K562 (cell line): ENCODE measurements at regions of chr3 and their contacts with region 1.

Region 1: GRCh38 chr3:47836986-47837385 is 34.0 kb downstream of the DHX30 start:
- DNase-seq: no peak
- ATAC-seq: peak; percentile 8; the same call in 2 of the 3 replicates
- H3K4me3 ChIP-seq: no peak overlapping the region
- H3K27ac ChIP-seq: no peak overlapping the region
- H3K4me1 ChIP-seq: no peaks in the 10 kb centered on the region
- H3K27me3 ChIP-seq: no peaks in the 10 kb centered on the region
- CTCF ChIP-seq: no peak
- EP300 ChIP-seq: no peak
- POLR2A ChIP-seq: no peak
- RAD21 ChIP-seq: no peak

Region 2: GRCh38 chr3:47849699-47850563 is 12.9 kb after region 1 on chr3:
- CTCF ChIA-PET with region 1: interaction called, 3 read pairs
- POLR2A ChIA-PET with region 1: interaction called, 13 read pairs
- in situ Hi-C with region 1: no loop called
- intact Hi-C with region 1: no loop called
- DNase-seq: peak in 2 of 4 experiments; percentile 46 to 60
- ATAC-seq: peak; percentile 85
- H3K4me3 ChIP-seq: no peak overlapping the region
- H3K27ac ChIP-seq: no peak overlapping the region
- H3K4me1 ChIP-seq: peaks cover 0 to 30% of the 10 kb centered on the region in 2 experiments; a peak in 1 of 5 replicates
- H3K27me3 ChIP-seq: no peaks in the 10 kb centered on the region
- CTCF ChIP-seq: peak; percentile 67 to 80 (median 68)
- EP300 ChIP-seq: no peak
- POLR2A ChIP-seq: no peak
- RAD21 ChIP-seq: peak in 1 of 2 experiments; percentile 44; a peak in 2 of 4 replicates

Region 3: DNA sequence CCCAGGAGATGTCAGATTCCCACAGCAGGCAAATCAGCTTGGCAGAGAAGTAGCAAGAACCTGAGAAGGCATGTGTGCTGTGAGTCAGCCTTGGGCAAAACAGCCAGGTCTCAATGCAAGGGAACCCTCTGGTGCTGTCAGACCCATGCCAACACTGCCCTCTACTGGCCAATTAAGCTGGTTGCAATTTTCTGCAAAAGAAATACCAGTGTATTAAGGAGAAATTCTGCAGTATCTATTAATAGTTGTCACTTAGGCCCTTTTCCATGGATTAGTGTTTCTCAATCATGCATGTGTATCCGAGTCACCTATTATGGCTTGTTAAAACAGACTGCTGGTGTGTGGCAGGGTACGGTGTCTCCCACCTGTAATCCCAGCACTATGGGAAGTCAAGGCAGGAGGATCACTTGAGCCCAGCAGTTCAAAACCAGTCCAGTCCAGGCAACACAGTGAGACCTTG is 153.0 kb after region 1 on chr3:
- CTCF ChIA-PET with region 1: interaction called, 14 read pairs
- POLR2A ChIA-PET with region 1: interaction called, 3 read pairs
- in situ Hi-C with region 1: loop called (anchors 10 kb)
- intact Hi-C with region 1: loop called (anchors 1 kb)
- DNase-seq: peak; percentile 78 to 89 (median 82)
- ATAC-seq: peak; percentile 98
- H3K4me3 ChIP-seq: no peak overlapping the region
- H3K27ac ChIP-seq: no peak overlapping the region
- H3K4me1 ChIP-seq: peaks cover 0 to 2% of the 10 kb centered on the region in 2 experiments; a peak in 1 of 5 replicates
- H3K27me3 ChIP-seq: no peaks in the 10 kb centered on the region
- CTCF ChIP-seq: peak; percentile 84 to 98 (median 97)
- EP300 ChIP-seq: no peak
- POLR2A ChIP-seq: no peak
- RAD21 ChIP-seq: peak; percentile 88 to 92